AG04449 (cell line): ENCODE measurements at regions of chr7 and their contacts with region 1.

Region 1: DNA sequence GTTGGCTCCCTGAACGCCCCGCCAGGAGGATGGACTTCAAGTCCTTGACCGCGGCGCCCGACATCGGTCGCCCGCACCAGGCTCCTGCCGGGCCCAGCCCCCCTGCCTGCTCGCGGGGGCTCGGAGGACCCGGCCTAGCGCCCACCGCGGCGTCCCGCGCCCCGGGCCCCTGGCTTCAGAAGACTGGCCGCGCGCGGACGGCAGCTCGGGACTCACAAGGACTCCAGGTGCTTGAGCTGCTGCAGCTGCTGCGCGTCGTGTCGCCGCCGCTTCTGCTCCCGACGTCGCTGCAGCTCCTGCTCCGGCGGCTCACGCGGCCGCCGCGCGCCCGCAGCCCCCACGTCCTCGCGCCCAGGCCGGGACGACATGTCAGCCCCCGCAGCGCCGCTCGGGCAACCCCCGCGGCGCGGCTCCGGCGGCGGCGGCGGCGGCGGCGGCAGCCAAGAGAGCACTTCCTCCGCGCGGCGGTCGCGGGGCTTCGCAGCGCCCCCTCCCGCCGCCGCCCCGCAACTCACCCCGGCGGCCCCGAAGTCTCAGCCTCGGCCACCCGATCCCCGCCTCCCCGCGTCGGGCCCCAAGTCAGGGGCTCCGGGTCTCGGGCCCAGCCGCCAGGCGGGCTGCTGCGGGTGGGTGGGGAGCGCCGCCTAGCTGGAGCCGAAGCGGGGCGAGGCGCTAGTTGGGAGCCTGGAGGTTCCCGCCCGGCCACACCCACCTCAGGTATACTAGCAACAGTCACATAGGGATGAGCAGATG is at the start of gene RP9:
- DNase-seq: no peak
- H3K4me3 ChIP-seq: peak within 1 kb of the TSS; percentile 75
- CTCF ChIP-seq: peak; percentile 64

Region 2: GRCh38 chr7:32802305-32802910 is 306.8 kb before region 1 on chr7:
- CTCF ChIA-PET with region 1: interaction called, 86 read pairs
- POLR2A ChIA-PET with region 1: no interaction called
- DNase-seq: no peak
- H3K4me3 ChIP-seq: no peak overlapping the region
- CTCF ChIP-seq: no peak

Region 3: DNA sequence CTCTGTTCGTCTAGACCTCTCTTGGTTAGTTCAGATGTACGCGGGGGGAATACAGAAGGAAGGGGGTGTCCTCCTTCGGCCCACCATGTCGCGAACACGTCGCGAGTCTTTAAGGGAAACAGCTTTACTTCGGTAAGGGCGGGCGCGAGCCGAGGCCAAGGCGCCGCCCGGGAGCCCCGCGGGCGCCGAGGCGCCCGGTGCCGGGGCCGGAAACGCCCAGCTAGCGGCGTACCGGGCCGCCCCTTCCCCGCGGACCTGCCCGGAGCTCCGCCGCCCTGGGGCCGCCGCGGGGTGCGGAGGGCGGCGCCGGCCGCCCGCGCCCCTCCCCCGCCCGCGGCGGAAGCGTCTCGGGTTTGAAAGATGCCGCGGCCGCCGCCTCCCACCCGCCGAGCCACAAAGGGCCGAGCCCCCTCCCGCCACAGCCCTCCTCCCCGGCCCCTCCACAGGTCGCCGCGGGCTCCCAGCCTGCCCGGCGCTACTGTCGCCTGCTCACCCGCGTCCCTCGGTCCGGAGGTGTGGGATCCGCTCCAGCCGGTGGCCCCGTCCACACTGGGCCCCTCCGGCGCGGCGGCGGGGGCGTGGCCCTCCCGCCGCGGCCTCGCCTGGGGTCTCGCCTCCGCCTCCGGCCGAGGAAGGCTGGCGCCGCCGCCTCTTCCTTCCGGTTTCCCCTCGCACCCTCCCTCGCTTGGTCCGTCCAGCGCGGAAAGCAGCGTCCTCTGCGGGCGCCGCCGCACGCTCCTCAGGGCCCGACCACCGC is 218.0 kb before region 1 on chr7 and contains the start of gene KBTBD2:
- CTCF ChIA-PET with region 1: interaction called, 11 read pairs
- POLR2A ChIA-PET with region 1: no interaction called
- DNase-seq: no peak
- H3K4me3 ChIP-seq: peak within 1 kb of the TSS; percentile 83
- CTCF ChIP-seq: peak; percentile 25

Region 4: GRCh38 chr7:32957326-32958045 is 151.7 kb before region 1 on chr7 and contains the start of gene FKBP9:
- CTCF ChIA-PET with region 1: interaction called, 11 read pairs
- POLR2A ChIA-PET with region 1: no interaction called
- DNase-seq: no peak
- H3K4me3 ChIP-seq: peak within 1 kb of the TSS; percentile 87
- CTCF ChIP-seq: no peak

Region 5: DNA sequence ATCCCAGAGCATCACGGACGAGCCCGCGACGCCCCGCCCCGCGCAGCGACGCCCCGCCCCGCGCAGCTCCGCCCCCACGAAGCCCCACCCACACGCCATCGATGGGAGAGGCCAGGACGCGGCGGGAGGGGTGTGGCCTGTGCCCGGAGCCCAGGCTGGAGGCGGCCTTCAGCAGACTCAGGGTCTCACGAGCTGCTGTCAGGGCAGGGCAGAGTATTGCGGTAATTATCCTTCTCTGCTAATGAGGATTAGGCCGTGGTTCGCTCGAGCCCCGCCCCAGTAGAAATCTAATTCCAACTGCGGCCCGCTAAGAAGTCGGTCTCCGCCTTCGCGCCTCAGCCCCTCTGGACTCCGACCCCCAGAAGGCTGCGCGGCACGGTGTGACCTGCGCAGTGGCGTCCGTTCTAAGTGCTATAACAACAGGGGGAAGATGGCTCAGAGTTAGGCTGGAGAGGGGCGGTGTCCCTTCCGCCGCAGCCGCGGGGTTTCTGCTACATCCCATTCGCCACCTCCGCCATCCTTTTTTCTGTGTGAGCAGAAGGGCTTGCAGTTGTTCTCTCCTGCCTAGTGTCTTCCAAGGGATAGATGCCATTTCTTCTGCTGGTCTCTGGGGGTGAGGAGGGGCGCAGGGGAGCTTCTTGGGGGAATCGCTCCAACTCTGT is 46.3 kb before region 1 on chr7:
- CTCF ChIA-PET with region 1: interaction called, 29 read pairs
- POLR2A ChIA-PET with region 1: interaction called, 4 read pairs
- DNase-seq: peak; percentile 58
- H3K4me3 ChIP-seq: peak overlapping the region; percentile 87
- CTCF ChIP-seq: no peak

Region 6: GRCh38 chr7:33091111-33091531 is 18.1 kb before region 1 on chr7:
- CTCF ChIA-PET with region 1: interaction called, 80 read pairs
- POLR2A ChIA-PET with region 1: no interaction called
- DNase-seq: no peak
- H3K4me3 ChIP-seq: no peak overlapping the region
- CTCF ChIP-seq: no peak

Region 7: DNA sequence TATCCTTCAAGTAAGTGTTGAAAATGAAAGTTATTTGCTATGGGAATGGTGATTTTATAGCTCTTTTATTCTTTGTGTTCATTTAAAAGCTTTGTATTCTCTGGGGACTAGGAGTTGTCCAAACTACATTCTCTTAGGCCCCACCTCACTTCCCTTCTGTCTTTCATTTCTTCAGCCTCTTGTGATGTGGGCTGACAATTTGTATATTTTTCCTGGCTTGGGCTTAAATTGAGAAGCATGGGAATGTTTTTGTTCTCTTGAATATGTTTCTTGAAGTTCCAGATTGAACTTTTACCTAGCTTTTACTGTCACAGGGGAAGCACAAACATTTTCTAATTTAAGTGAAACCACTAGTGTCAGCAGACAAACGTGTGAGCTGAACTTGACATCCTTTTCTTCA is 48.1 kb after region 1 on chr7:
- CTCF ChIA-PET with region 1: no interaction called
- POLR2A ChIA-PET with region 1: no interaction called
- DNase-seq: no peak
- H3K4me3 ChIP-seq: no peak overlapping the region
- CTCF ChIP-seq: no peak

Region 8: GRCh38 chr7:33369888-33370287 is 260.7 kb after region 1 on chr7:
- CTCF ChIA-PET with region 1: no interaction called
- POLR2A ChIA-PET with region 1: no interaction called
- DNase-seq: no peak
- H3K4me3 ChIP-seq: no peak overlapping the region
- CTCF ChIP-seq: no peak